Activated T-helper 2 cell treated with anti-CD3 and anti-CD28 coated beads, Interferon-gamma antibody, Interleukin-2, Interleukin-4, amounts not matched to agents 10 μg/mL and 5 μg/mL and 100 μg/mL, durations not matched to agents 14 hours and 24 hours and 36 hours (primary cell): ENCODE measurements at regions of chr2 and their contacts with region 1.

Region 1: DNA sequence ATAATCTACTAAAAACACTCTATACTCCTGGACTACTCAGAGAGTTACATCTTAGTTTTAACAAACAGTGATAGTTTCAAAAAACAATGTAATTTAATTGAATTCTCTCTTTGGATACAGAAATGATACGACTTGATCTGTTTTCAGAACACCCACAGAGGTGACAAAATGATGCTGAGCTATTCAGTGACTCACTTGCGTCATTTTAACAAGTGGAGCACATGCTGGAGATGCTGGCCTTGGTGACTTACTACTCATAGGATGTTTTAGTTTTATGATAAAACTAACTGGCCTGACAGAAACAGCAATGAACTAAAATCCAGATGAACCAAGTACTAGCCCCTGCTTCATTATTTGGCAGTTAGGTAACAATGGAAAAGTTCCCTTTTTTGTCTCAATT is 101.3 kb upstream of the ITGB6 start:
- DNase-seq: no peak
- H3K4me3 Mint-ChIP-seq: no peak overlapping the region
- H3K27ac Mint-ChIP-seq: peak overlapping the region; percentile 40
- H3K4me1 Mint-ChIP-seq: peaks cover 43% of the 10 kb centered on the region
- H3K27me3 Mint-ChIP-seq: no peaks in the 10 kb centered on the region

Region 2: GRCh38 chr2:160269803-160270570 is 31.4 kb before region 1 on chr2:
- intact Hi-C with region 1: loop called (anchors 5 kb)
- DNase-seq: peak; percentile 31
- H3K4me3 Mint-ChIP-seq: peak overlapping the region; percentile 56
- H3K27ac Mint-ChIP-seq: no peak overlapping the region
- H3K4me1 Mint-ChIP-seq: peaks cover 45% of the 10 kb centered on the region
- H3K27me3 Mint-ChIP-seq: peaks cover 22% of the 10 kb centered on the region